Esophagus muscularis mucosa (tissue), 4 donors: ENCODE measurements at regions of chr1 and their contacts with region 1.

Region 1: GRCh38 chr1:244920911-244921761 is 56.8 kb upstream of the HNRNPU start:
- DNase-seq: no peak
- H3K4me3 ChIP-seq: no peak overlapping the region
- H3K27ac ChIP-seq: no peak overlapping the region
- H3K4me1 ChIP-seq: peaks cover 4 to 14% (median 8%) of the 10 kb centered on the region in 4 donors
- H3K27me3 ChIP-seq: no peaks in the 10 kb centered on the region
- CTCF ChIP-seq: no peak
- EP300 ChIP-seq: no peak
- POLR2A ChIP-seq: no peak

Region 2: DNA sequence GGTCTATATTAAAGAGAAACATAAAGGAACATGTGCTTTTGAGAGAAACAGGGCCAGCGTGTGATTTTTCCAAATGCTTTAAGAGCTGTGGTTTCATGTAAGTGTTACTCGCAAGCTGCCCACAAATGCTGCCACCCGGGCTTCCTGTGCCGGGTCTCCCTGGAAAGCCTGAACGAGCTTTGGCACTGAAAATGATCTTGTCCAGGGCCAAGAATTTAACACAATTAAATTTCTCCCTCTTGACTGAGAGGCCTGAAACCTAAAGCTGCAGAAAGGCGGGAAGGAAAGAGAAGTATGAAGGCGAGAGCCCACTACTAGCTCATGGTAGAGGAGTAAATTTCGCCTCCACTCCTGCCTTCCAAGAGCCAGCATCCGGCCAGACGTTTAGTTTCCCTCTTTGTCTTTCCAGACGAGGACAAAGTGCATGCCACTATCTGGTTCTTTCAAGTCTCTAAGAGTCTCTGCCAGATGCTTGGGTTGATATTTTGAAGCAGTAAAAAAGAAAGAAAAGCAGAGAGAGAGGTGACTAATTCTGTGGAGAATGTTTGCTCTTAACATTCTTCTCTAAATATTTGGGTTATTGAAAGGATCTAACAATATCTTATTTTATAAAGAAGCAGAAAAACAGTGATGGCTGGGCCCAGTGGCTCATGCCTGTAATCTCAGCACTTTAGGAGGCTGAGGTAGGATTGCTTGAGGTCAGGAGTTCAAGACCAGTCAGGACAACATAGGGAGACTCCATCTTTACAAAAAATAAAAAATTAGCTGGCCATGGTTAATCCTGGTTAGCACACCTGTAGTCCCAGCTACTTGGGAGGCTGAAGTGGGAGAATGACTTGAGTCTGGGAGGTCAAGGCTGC is 43.2 kb after region 1 on chr1:
- intact Hi-C with region 1: loop called (anchors 5 kb)
- DNase-seq: no peak
- H3K4me3 ChIP-seq: peak overlapping the region in 3 of 4 donors; percentile 4 to 25 (median 19)
- H3K27ac ChIP-seq: peak overlapping the region; percentile 71 to 76 (median 74)
- H3K4me1 ChIP-seq: peaks cover 24 to 49% (median 41%) of the 10 kb centered on the region in 4 donors
- H3K27me3 ChIP-seq: no peaks in the 10 kb centered on the region
- CTCF ChIP-seq: no peak
- EP300 ChIP-seq: no peak
- POLR2A ChIP-seq: no peak

Region 3: DNA sequence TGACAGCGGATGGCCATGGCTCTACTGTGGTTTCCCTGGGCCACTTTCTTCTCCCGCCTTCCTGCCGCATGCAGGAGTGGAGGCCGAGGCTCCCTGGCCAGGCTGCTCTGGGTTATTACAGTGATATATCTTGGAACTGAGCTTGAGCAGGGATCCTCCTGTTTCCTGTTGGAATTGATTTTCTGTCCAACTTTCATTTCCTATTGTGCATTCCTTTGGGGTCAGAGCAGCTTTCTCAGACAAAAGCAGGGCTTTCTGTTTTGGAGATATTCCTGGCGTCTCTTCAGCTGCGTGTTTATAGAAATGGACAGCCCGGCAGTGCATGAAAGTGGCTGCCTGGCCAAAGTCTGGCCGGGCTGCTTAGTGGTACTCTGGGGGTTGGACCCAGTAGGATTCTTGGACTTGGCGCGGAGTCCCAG is 380.0 kb after region 1 on chr1:
- intact Hi-C with region 1: no loop called
- DNase-seq: no peak
- H3K4me3 ChIP-seq: peak overlapping the region; percentile 6 to 41 (median 22)
- H3K27ac ChIP-seq: peak overlapping the region in 3 of 4 donors; percentile 5 to 20 (median 15)
- H3K4me1 ChIP-seq: peaks cover 0 to 16% (median 13%) of the 10 kb centered on the region in 4 donors
- H3K27me3 ChIP-seq: no peaks in the 10 kb centered on the region
- CTCF ChIP-seq: no peak
- EP300 ChIP-seq: no peak
- POLR2A ChIP-seq: no peak